Esophagus muscularis mucosa (tissue), 4 donors: ENCODE measurements at regions of chr13 and their contacts with region 1.

Region 1: DNA sequence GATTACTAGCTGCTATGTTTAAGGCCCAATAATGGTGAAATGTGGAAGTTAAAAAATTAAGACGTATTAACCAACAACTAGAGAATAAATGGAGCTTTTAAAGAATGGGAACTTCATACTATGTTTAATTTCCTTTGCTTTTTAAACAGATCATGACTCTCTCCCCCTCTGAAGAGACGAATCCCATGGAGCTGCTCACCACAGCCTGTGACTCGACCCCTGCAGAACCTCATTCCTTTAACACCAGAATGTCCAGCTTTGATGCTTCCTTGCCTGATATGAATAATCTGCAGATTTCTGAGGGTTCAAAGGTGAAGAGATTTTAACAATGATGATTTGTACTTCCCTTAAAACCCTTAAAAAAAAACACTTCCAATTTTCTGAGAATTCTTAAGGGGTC is 53.0 kb downstream of the ZAR1L start:
- DNase-seq: no peak
- H3K4me3 ChIP-seq: peak overlapping the region in 1 of 4 donors; percentile 8
- H3K27ac ChIP-seq: peak overlapping the region; percentile 69 to 77 (median 76)
- H3K4me1 ChIP-seq: peaks cover 63 to 79% (median 66%) of the 10 kb centered on the region in 4 donors
- H3K27me3 ChIP-seq: no peaks in the 10 kb centered on the region
- CTCF ChIP-seq: no peak
- EP300 ChIP-seq: no peak
- POLR2A ChIP-seq: no peak

Region 2: GRCh38 chr13:32284927-32285632 is 22.9 kb after region 1 on chr13:
- intact Hi-C with region 1: loop called (anchors 1 kb)
- DNase-seq: no peak
- H3K4me3 ChIP-seq: peak overlapping the region in 2 of 4 donors; percentile 9 to 19
- H3K27ac ChIP-seq: peak overlapping the region; percentile 72 to 77 (median 76)
- H3K4me1 ChIP-seq: peaks cover 28 to 42% (median 34%) of the 10 kb centered on the region in 4 donors
- H3K27me3 ChIP-seq: no peaks in the 10 kb centered on the region
- CTCF ChIP-seq: no peak
- EP300 ChIP-seq: no peak
- POLR2A ChIP-seq: no peak

Region 3: DNA sequence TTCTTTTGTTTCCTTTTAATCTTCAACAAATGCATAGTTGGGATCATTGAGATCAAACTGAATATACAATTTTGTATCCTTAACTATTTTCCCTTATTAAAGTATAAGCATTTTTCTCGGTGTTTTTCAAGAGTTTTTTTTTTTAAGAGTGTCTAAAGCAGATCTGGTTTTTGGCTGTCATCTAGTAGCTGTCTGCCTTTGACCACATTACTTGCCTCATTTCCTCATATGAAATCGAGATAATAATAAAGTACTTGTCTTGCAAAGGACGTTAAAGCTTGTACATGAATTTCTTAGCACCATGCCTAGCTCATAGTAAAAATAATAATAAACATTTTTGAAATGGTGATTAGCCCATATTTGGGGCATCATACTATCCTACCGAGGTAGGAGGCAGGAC is 445.3 kb after region 1 on chr13:
- intact Hi-C with region 1: no loop called
- DNase-seq: no peak
- H3K4me3 ChIP-seq: no peak overlapping the region
- H3K27ac ChIP-seq: no peak overlapping the region
- H3K4me1 ChIP-seq: no peaks in the 10 kb centered on the region
- H3K27me3 ChIP-seq: no peaks in the 10 kb centered on the region
- CTCF ChIP-seq: no peak
- EP300 ChIP-seq: no peak
- POLR2A ChIP-seq: no peak